GM12878 (cell line): ENCODE measurements at regions of chr6 and their contacts with region 1.

Region 1: GRCh38 chr6:6046716-6047115 is 40.0 kb upstream of the NRN1 start:
- DNase-seq: no peak
- ATAC-seq: no peak
- H3K4me3 ChIP-seq: no peak overlapping the region
- H3K27ac ChIP-seq: no peak overlapping the region
- H3K4me1 ChIP-seq: no peaks in the 10 kb centered on the region
- H3K27me3 ChIP-seq: peaks cover 2 to 4% of the 10 kb centered on the region in 2 experiments; a peak in 2 of 4 replicates
- CTCF ChIP-seq: no peak
- EP300 ChIP-seq: no peak
- POLR2A ChIP-seq: no peak
- RAD21 ChIP-seq: no peak

Region 2: GRCh38 chr6:5764401-5764955 is 282.2 kb before region 1 on chr6:
- CTCF ChIA-PET with region 1: no interaction called
- POLR2A ChIA-PET with region 1: no interaction called
- RAD21 ChIA-PET with region 1: no interaction called
- SMC1A ChIA-PET with region 1: no interaction called
- in situ Hi-C with region 1: no loop called
- intact Hi-C with region 1: no loop called
- DNase-seq: peak; percentile 8
- ATAC-seq: no peak; the same call in 2 of the 3 replicates
- H3K4me3 ChIP-seq: no peak overlapping the region
- H3K27ac ChIP-seq: no peak overlapping the region
- H3K4me1 ChIP-seq: peaks cover 7% of the 10 kb centered on the region
- H3K27me3 ChIP-seq: no peaks in the 10 kb centered on the region
- CTCF ChIP-seq: no peak
- EP300 ChIP-seq: no peak
- POLR2A ChIP-seq: no peak
- RAD21 ChIP-seq: no peak

Region 3: GRCh38 chr6:6026513-6027205 is 20.1 kb before region 1 on chr6:
- CTCF ChIA-PET with region 1: no interaction called
- POLR2A ChIA-PET with region 1: no interaction called
- RAD21 ChIA-PET with region 1: no interaction called
- SMC1A ChIA-PET with region 1: no interaction called
- in situ Hi-C with region 1: no loop called
- intact Hi-C with region 1: no loop called
- DNase-seq: no peak
- ATAC-seq: no peak
- H3K4me3 ChIP-seq: no peak overlapping the region
- H3K27ac ChIP-seq: no peak overlapping the region
- H3K4me1 ChIP-seq: no peaks in the 10 kb centered on the region
- H3K27me3 ChIP-seq: peaks cover 0 to 2% of the 10 kb centered on the region in 2 experiments
- CTCF ChIP-seq: no peak
- EP300 ChIP-seq: no peak
- POLR2A ChIP-seq: no peak
- RAD21 ChIP-seq: no peak

Region 4: DNA sequence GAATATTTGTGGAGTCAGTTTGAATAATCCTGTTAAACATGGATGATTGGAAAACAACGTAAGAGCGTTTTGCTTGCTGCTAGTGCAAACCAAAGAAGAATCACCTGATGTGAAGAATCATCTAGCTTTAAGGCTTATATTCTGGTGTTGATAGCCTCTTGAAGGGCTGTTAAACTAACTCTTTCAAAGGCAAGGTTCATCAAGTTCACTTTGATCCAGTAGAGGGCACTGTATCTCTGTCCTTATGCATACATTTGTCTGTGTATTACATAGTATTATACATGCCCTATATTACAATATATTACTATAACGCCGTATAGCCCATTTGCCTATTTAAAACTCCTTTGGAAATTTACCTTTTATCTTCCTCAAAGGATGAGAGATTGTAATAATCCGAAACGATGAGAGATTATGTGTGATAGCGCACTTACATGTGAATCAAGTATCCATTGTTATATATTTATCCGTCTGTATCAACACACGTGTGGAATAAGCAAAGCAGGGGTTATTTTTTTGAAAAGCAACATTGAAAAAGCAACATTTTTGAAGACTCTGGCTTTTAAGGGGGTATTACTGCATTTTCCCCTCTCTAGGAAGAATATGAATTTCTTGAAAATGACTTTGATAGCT is 10.8 kb after region 1 on chr6:
- CTCF ChIA-PET with region 1: interaction called, 12 read pairs
- POLR2A ChIA-PET with region 1: no interaction called
- RAD21 ChIA-PET with region 1: no interaction called
- SMC1A ChIA-PET with region 1: no interaction called
- in situ Hi-C with region 1: no loop called
- intact Hi-C with region 1: no loop called
- DNase-seq: peak; percentile 53
- ATAC-seq: peak; percentile 97
- H3K4me3 ChIP-seq: no peak overlapping the region
- H3K27ac ChIP-seq: no peak overlapping the region
- H3K4me1 ChIP-seq: no peaks in the 10 kb centered on the region
- H3K27me3 ChIP-seq: no peaks in the 10 kb centered on the region; a peak in 2 of 4 replicates
- CTCF ChIP-seq: peak; percentile 54 to 68 (median 66); a peak in 5 of 6 replicates
- EP300 ChIP-seq: no peak
- POLR2A ChIP-seq: no peak
- RAD21 ChIP-seq: peak; percentile 74